ENCODE measurements at regions of chr2 and their contacts with region 1.

Region 1: GRCh38 chr2:188524519-188525113 is 232.9 kb downstream of the GULP1 start:
- DNase-seq: no peak
- H3K4me3 ChIP-seq: no peak overlapping the region
- H3K27ac ChIP-seq: peak overlapping the region in 1 of 2 donors; percentile 4
- H3K4me1 ChIP-seq: peaks cover 0 to 13% of the 10 kb centered on the region in 2 donors
- H3K27me3 ChIP-seq: no peaks in the 10 kb centered on the region
- CTCF ChIP-seq: peak; percentile 46 to 83 (median 76)

Region 2: DNA sequence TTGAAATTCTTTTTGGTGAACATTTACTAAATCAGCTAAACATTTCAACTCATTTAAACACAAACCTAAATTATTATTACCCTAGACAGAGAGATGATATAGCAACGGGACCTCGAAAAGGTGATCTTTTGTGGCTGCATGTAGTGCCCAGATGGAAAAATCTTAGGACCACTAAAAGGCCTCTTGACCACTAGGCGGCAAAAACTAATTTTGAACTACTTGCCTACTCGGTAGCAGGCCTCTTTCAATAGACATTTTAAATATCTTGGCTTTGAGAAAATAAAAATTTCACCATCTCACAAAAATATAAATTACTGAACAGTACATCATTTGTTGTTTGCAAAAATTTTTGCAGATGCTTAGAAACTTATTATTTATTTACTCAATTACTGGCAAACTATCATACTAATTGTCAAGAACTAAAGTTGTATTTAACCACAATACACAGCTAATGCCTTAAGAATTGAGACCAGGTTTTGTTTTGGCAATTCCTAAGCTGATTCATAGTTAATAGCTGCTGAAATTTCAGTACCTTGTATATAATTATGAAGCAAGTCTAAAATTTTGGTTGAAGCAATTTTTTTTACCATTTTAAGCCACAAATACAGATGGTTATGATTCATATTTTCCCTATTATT is 458.9 kb after region 1 on chr2:
- intact Hi-C with region 1: loop called (anchors 2 kb)
- DNase-seq: no peak
- H3K4me3 ChIP-seq: peak overlapping the region; percentile 31 to 37
- H3K27ac ChIP-seq: peak overlapping the region; percentile 83 to 85
- H3K4me1 ChIP-seq: peaks cover 3 to 29% of the 10 kb centered on the region in 2 donors
- H3K27me3 ChIP-seq: no peaks in the 10 kb centered on the region
- CTCF ChIP-seq: peak; percentile 6 to 39 (median 16)

Region 3: GRCh38 chr2:189076572-189076971 is 552.0 kb after region 1 on chr2:
- intact Hi-C with region 1: loop called (anchors 10 kb)
- DNase-seq: no peak
- H3K4me3 ChIP-seq: no peak overlapping the region
- H3K27ac ChIP-seq: peak overlapping the region; percentile 53 to 69
- H3K4me1 ChIP-seq: peaks cover 0 to 4% of the 10 kb centered on the region in 2 donors
- H3K27me3 ChIP-seq: no peaks in the 10 kb centered on the region
- CTCF ChIP-seq: no peak